ENCODE measurements at regions of chr22 and their contacts with region 1.

Region 1: GRCh38 chr22:26393929-26394328 is 35.1 kb upstream of the ASPHD2 start:
- DNase-seq: no peak

Region 2: DNA sequence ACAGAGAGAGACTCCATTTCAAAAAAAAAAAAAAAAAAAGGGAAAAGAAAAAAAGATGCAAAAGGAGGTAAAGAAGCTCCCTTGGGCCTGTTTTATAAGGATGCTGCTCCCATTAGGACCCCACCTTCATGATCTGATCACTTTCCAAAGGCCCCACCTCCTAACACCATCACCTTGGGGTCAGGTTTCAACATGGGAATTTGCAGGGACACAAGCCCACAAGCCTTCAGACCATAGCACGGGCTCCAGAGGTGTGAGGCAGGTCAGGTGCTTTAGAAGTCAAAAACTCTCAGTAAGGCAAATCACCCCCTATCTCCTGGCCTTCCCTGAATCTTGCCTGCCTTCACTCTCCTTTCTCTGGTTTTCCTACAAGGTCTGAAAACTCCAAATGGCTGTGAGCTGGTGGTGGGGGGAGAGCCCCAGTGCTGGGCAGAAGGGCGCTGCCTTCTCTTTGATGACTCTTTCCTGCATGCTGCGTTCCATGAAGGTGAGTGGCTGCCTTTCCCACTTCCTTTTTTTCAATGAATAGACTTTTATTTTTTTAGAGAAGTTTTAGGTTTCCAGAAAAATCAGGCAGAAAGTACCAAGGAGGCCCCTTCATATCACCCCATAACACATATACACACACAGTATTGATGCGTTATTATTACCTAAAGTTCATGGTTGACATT is 48.3 kb after region 1 on chr22:
- intact Hi-C with region 1: no loop called
- DNase-seq: no peak

Region 3: DNA sequence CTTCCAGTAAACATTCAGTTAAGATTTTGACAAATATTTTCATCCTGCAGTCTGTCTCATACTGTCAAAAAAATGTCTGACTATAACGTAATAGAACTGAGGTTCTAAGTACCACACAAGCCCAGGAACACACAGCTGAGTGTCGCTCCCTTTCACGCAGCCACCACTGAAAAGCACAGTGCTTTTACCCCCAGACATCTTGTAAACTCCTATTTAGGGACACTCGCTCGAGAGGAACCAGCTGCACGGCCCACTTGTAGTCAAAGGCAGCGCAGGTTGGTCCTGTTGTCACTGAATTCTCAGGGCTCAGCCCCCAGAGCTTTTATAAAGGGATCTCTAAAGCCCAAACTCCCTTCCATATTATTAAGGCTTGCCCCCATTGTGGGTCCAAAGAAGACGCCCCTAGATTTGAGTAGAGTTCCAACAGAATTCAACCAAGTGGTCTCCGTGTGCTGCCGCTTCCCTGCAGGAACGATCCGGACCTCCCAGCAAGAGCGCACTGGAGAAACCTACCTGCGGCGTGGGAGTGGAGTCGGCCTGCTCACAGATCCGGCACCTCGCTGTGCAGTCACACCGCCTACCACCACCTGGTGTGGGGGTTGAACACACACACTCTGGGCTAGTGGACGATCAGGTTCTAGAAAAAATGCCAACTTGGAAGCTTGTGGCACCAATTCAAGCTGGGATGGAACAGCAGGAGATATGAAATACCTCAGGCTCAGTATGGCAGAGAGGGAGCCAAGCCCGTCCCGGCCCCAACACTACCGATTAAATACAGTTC is 58.5 kb after region 1 on chr22:
- intact Hi-C with region 1: loop called (anchors 2 kb)
- DNase-seq: no peak